ENCODE measurements at regions of chr1 and their contacts with region 1.

Region 1: DNA sequence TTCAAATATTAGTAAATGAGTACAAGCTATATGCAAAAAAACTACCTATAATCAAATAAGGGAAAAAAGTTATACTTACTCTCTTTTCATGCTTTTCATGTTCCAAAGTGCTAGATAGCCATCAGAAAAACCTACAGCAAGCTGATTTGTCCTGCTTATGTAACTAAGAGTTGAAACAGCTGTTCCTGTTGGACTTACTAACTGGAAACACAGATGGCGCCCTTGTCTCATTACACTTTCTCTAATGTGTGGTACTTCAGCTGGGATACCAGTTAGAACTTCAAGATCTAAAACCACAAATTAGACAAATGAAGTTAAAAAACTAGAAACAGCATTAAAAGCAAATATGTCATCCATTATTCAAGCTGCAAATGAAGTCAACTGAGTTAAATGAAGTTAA is 24.3 kb downstream of the AHCTF1 start:
- DNase-seq: peak in 4 of 7 donors; percentile 36 to 63 (median 50)
- H3K4me3 ChIP-seq: no peak overlapping the region
- H3K27ac ChIP-seq: no peak overlapping the region
- H3K4me1 ChIP-seq: peaks cover 0 to 5% of the 10 kb centered on the region in 2 donors
- H3K27me3 ChIP-seq: no peaks in the 10 kb centered on the region
- CTCF ChIP-seq: peak; percentile 16 to 55 (median 46)
- POLR2A ChIP-seq: no peak

Region 2: DNA sequence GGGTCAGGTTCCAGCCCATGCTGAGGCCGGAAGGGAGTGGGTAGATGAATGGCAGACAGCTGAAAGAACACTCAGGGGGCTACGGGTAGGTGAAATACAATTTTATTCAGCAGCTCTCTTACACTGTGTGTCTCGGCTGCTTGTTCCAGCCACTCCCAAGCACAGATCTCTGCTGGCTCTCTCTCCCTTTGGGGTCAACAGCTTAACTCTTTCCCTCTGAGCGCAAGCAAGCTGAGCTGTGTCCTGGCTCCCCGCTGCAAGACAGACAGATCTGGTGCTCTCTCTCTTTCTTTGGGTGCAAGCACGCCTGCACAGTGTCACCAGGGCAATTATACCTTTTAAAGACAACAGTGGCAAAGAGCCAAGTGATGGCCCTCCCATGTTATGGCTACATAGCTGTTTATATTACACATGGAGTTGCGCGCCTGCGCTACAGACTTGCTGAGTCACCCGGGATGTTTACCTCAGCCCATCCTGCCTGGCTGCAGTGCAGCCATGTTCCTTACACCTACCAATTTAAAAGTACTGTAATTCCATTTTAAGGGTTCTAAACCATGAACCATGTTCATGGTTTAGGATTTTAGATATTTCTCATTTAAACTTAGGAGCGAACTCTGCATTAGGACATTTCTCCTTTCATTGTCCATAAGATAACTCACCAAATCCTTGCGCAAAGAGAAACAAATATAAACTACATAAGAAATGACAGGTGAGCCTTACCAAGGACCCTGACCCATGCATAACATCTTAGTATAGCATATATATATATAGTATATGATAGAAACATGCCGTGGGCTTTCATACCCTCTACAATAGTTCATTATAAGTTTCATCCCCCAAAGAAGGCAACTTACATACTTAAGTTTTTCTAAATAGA is 796.9 kb before region 1 on chr1:
- intact Hi-C with region 1: no loop called
- DNase-seq: no peak
- H3K4me3 ChIP-seq: no peak overlapping the region
- H3K27ac ChIP-seq: no peak overlapping the region
- H3K4me1 ChIP-seq: no peaks in the 10 kb centered on the region
- H3K27me3 ChIP-seq: no peaks in the 10 kb centered on the region
- CTCF ChIP-seq: no peak
- POLR2A ChIP-seq: no peak

Region 3: GRCh38 chr1:246959944-246960693 is 52.6 kb after region 1 on chr1:
- intact Hi-C with region 1: loop called (anchors 10 kb)
- DNase-seq: no peak
- H3K4me3 ChIP-seq: no peak overlapping the region
- H3K27ac ChIP-seq: peak overlapping the region in 2 of 5 donors; percentile 4 to 40
- H3K4me1 ChIP-seq: peaks cover 0 to 4% of the 10 kb centered on the region in 2 donors
- H3K27me3 ChIP-seq: no peaks in the 10 kb centered on the region
- CTCF ChIP-seq: peak in 3 of 6 experiments; percentile 9 to 26 (median 9)
- POLR2A ChIP-seq: no peak